Activated CD4-positive, alpha-beta T cell treated with anti-CD3 and anti-CD28 coated beads for 36 hours (primary cell): ENCODE measurements at regions of chr11 and their contacts with region 1.

Region 1: DNA sequence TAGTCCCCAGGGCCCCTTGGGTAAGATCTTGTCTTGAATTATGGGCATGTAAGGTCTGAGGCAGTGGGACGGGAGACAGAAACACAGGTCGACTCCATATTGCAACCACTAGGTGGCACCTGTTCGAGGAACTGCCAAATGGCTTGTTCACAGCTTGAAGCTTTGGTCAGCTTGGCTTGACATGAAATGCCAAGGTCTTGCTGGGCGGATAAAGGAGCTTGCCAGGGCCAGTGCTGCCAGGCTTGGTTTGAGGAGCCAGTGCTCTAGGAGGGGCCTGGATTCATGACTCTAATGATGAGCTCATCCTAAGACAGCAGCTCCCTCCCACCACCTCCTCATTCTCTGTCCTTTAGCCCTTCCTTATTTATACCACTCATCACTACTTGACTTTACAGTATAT is 11.9 kb upstream of the NRIP3 start:
- DNase-seq: peak; percentile 72
- ATAC-seq: peak; percentile 93
- H3K4me3 Mint-ChIP-seq: no peak overlapping the region
- H3K27ac Mint-ChIP-seq: no peak overlapping the region
- H3K4me1 Mint-ChIP-seq: peaks cover 19% of the 10 kb centered on the region
- H3K27me3 Mint-ChIP-seq: peaks cover 10% of the 10 kb centered on the region

Region 2: GRCh38 chr11:8997451-8997850 is 18.2 kb before region 1 on chr11:
- CTCF ChIA-PET with region 1: interaction called, 14 read pairs
- POLR2A ChIA-PET with region 1: no interaction called
- intact Hi-C with region 1: no loop called
- DNase-seq: no peak
- ATAC-seq: no peak
- H3K4me3 Mint-ChIP-seq: no peak overlapping the region
- H3K27ac Mint-ChIP-seq: no peak overlapping the region
- H3K4me1 Mint-ChIP-seq: peaks cover 13% of the 10 kb centered on the region
- H3K27me3 Mint-ChIP-seq: peaks cover 24% of the 10 kb centered on the region

Region 3: DNA sequence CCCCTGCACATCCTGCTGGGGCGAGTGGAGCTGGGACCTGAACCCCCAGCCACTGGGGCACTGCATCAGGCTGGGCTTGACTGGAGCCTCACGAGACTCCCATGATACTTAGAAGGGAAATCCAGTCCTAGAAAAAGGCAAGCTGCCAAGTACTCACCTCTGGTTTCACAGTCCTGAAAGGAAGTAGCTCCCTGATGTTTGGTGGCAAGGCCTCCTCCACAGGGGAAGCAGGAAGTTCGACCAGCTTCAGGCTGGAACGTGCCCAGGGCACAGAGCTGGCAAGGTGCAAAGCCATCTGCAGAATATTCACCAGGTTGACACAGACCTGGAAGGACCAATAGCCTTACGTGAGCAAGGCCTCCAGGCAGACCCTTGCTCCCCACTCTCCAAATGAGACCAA is 14.9 kb after region 1 on chr11:
- CTCF ChIA-PET with region 1: interaction called, 33 read pairs
- POLR2A ChIA-PET with region 1: no interaction called
- intact Hi-C with region 1: no loop called
- DNase-seq: no peak
- ATAC-seq: no peak
- H3K4me3 Mint-ChIP-seq: no peak overlapping the region
- H3K27ac Mint-ChIP-seq: no peak overlapping the region
- H3K4me1 Mint-ChIP-seq: no peaks in the 10 kb centered on the region
- H3K27me3 Mint-ChIP-seq: no peaks in the 10 kb centered on the region

Region 4: DNA sequence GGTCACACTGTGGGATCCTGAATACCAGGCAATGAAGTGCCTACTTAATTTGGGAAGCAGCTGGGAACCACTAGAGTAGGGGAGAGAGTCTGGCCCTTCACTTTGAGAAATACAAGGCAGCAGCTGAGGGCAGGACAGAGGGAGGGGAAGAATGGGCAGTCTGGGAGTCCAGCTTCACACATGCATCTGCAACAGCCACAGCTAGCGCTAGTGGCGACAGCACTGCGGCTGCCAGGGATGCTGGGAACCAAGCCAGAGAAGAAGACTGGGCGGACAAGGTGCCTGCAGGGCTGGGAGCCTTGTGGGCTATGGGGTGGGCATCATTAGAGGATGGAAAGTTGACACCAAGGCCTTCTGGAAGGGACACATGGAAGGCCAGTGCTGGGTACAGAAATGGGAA is 59.9 kb after region 1 on chr11:
- CTCF ChIA-PET with region 1: interaction called, 12 read pairs
- POLR2A ChIA-PET with region 1: no interaction called
- intact Hi-C with region 1: no loop called
- DNase-seq: no peak
- ATAC-seq: no peak
- H3K4me3 Mint-ChIP-seq: no peak overlapping the region
- H3K27ac Mint-ChIP-seq: no peak overlapping the region
- H3K4me1 Mint-ChIP-seq: no peaks in the 10 kb centered on the region
- H3K27me3 Mint-ChIP-seq: peaks cover 20% of the 10 kb centered on the region

Region 5: DNA sequence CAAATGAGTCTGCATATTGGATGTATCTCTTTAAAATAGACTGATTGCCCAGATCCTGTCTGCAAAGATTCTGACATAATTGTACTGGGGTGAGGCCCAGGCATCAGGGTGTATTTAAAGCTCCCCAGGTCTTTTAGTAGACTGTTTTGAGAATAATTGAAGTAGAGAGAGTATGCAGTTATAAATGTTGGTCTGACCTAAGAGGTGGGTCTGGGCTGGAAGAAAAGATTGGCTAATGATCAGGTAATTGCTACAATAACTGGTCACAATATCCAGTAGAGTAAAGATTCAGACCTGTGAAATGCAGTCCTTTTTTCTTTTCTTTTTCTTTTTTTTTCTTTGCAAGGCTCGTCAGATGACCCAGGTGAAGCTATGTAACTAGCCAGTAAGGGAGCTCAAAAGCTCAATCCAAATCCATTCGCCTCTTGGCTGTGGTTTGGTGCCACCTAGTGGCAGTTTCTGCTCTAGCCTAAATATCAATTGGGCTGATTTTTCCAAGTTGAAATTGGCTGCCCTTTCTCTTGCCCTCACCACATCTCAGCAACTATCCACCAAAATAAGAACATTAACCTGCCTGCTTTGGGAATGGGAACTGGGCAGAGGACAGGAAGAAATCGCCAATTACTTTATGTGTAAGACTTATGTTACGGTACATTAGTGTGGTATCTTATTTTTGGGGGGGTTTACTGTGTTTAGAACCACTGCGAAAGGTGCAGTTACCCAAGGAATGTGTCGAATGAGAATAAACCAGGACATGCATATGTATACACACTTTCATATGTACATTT is 491.0 kb after region 1 on chr11:
- CTCF ChIA-PET with region 1: interaction called, 22 read pairs
- POLR2A ChIA-PET with region 1: no interaction called
- intact Hi-C with region 1: loop called (anchors 1 kb)
- DNase-seq: peak; percentile 88
- ATAC-seq: peak; percentile 88
- H3K4me3 Mint-ChIP-seq: no peak overlapping the region
- H3K27ac Mint-ChIP-seq: no peak overlapping the region
- H3K4me1 Mint-ChIP-seq: peaks cover 4% of the 10 kb centered on the region
- H3K27me3 Mint-ChIP-seq: no peaks in the 10 kb centered on the region

Region 6: GRCh38 chr11:9534791-9535781 is 519.4 kb after region 1 on chr11:
- CTCF ChIA-PET with region 1: no interaction called
- POLR2A ChIA-PET with region 1: no interaction called
- intact Hi-C with region 1: no loop called
- DNase-seq: peak; percentile 91
- ATAC-seq: peak; percentile 71
- H3K4me3 Mint-ChIP-seq: no peak overlapping the region
- H3K27ac Mint-ChIP-seq: no peak overlapping the region
- H3K4me1 Mint-ChIP-seq: no peaks in the 10 kb centered on the region
- H3K27me3 Mint-ChIP-seq: no peaks in the 10 kb centered on the region